T-cell (primary cell): ENCODE measurements at regions of chr4 and their contacts with region 1.

Region 1: DNA sequence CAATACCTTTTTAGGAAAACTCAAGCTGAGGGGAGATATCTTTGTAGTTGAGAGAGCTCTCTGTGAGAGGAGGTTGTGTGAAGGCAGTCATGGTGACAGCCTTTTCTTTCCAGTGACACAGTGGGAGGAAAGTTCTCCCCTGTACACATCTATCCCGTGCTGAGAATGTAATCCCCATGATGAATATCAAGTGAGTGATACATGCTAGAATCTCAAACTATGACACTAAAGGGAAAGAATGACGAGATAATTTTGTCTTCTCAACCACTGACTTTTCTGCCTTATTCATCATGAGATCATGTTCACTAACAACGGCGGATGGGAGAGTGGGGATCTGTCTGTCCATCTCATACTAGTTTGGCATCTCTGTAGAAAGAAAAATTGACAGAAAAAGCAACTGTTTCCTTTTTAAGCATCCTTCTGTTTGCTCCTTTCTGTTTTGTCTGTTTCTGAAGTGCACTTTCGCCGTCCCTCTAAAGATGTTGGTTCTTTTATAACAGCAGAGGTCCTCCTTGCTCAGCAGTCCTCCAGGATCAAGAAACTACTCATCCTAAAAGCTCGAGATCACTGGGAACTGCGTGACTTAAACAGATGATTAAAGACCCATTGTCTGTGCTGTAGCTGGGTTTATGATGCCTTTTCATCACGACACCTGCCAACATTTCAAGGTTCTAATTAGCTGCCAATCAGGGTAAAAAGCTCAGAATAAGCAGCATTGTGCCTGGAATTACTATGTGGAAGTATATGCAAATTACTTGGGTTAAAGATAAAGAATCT is 137.6 kb downstream of the DCK start:
- DNase-seq: no peak
- ATAC-seq: no peak
- H3K4me3 ChIP-seq: no peak overlapping the region
- H3K4me3 Mint-ChIP-seq: no peak overlapping the region
- H3K27ac ChIP-seq: no peak overlapping the region
- H3K27ac Mint-ChIP-seq: no peak overlapping the region
- H3K4me1 ChIP-seq: no peaks in the 10 kb centered on the region
- H3K4me1 Mint-ChIP-seq: no peaks in the 10 kb centered on the region
- H3K27me3 ChIP-seq: no peaks in the 10 kb centered on the region
- H3K27me3 Mint-ChIP-seq: peaks cover 0 to 4% of the 10 kb centered on the region in 2 donors

Region 2: DNA sequence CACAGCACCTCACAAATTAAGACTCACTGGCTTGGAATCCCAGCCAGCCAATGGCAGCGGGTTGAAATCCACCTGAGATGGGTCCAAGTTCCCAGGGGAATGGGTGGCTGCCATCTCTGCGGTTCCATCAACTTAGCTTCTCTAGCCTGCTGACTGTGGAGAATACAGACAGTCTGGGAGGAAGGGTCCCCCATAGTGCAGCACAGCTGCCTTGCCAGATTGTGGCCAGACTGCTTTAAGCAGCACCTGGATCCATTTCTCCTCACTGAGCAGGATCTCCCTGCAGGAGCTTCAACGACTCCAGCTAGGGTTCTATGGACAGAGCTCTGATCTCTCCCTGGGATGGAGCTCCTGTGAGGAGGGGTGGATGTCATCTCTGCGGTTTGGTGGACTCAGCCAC is 85.8 kb before region 1 on chr4:
- CTCF ChIA-PET with region 1: interaction called in 1 of 2 experiments, 13 read pairs
- POLR2A ChIA-PET with region 1: no interaction called
- DNase-seq: no peak
- ATAC-seq: no peak
- H3K4me3 ChIP-seq: no peak overlapping the region
- H3K4me3 Mint-ChIP-seq: no peak overlapping the region
- H3K27ac ChIP-seq: no peak overlapping the region
- H3K27ac Mint-ChIP-seq: no peak overlapping the region
- H3K4me1 ChIP-seq: no peaks in the 10 kb centered on the region
- H3K4me1 Mint-ChIP-seq: no peaks in the 10 kb centered on the region
- H3K27me3 ChIP-seq: peaks cover 0 to 4% of the 10 kb centered on the region in 2 experiments
- H3K27me3 Mint-ChIP-seq: no peaks in the 10 kb centered on the region